ENCODE measurements at regions of chr17 and their contacts with region 1.

Region 1: DNA sequence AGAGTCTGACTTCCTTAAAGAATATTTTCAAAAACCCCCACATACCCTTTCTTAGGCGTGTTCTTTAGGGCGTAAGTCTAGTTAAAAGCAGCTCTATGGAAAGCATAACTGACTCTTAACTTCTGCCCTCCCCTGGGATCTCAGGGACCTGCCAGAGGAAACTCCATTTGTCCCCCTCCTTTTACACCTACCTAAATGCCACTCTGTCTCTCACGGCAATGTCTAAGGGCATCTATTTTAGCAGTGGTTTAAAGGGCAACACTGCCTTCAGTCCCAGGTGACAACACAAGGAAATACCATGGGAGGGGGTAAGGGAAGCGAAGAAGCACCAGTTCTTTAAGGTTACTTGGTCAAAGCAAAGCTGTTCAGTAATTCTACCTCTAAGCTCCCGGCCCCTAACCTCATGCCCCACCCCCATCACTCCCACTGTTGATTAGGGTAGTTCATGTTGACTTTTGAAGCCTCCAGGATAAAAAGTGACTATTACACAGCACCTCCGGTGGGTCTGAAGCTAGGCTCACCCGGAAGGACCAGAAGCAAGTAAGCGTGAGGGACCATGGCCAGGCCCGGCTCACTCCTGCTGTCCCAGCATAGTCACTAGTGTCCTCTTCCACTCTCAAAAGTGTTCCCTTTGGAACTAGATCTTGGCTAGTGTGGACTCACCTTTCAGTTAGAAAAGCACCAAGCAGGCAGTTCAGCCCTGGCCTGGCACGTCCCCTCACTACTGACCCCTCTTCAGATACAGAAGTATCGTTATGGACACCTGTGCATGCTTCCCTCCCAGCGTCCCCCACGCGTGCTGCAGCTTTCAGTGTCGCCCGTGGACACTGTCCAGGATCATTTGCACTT is 47.1 kb downstream of the CYTH1 start:
- DNase-seq: no peak
- ATAC-seq: no peak
- H3K4me3 ChIP-seq: peak overlapping the region in 1 of 2 experiments; percentile 21; a peak in 3 of 4 replicates
- H3K27ac ChIP-seq: 0 out of 2 replicates have a peak overlapping the region, but pooled peaks have one; percentile 5
- H3K4me1 ChIP-seq: peaks cover 33% of the 10 kb centered on the region
- H3K27me3 ChIP-seq: no peaks in the 10 kb centered on the region
- CTCF ChIP-seq: no peak

Region 2: GRCh38 chr17:78682363-78682762 is 52.7 kb before region 1 on chr17:
- CTCF ChIA-PET with region 1: no interaction called
- POLR2A ChIA-PET with region 1: interaction called, 15 read pairs
- in situ Hi-C with region 1: no loop called
- intact Hi-C with region 1: no loop called
- DNase-seq: no peak
- ATAC-seq: no peak
- H3K4me3 ChIP-seq: no peak overlapping the region
- H3K27ac ChIP-seq: no peak overlapping the region
- H3K4me1 ChIP-seq: peaks cover 8% of the 10 kb centered on the region
- H3K27me3 ChIP-seq: no peaks in the 10 kb centered on the region
- CTCF ChIP-seq: no peak

Measured in Panc1 (cell line).